Tibial artery (tissue), 4 donors: ENCODE measurements at regions of chr11 and their contacts with region 1.

Region 1: GRCh38 chr11:3341298-3341697 is 37.6 kb downstream of the ZNF195 start:
- DNase-seq: peak in 1 of 2 donors; percentile 38
- H3K4me3 ChIP-seq: no peak overlapping the region
- H3K27ac ChIP-seq: no peak overlapping the region
- H3K4me1 ChIP-seq: no peaks in the 10 kb centered on the region
- H3K27me3 ChIP-seq: peaks cover 0 to 11% of the 10 kb centered on the region in 2 donors
- CTCF ChIP-seq: peak; percentile 38 to 49

Region 2: DNA sequence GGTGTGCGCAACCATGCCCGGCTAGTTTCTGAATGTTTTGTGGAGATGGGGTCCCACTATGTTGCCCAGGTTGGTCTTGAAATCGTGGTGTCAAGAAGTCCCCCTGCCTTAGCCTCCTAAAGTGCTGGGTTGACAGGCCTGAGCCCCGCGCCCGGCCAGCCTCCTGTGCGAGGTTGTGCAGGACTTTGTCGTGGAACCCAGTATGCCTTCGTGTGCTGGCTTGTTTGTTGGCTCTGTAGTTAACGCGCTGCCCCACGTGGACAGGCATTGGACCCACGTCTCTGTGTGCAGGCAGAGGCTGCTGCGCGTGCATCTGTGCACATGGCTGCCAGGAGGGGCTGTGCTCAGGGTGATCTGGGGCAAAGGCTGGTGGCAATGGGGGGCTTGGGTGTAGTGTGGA is 71.5 kb after region 1 on chr11:
- intact Hi-C with region 1: loop called (anchors 10 kb)
- DNase-seq: no peak
- H3K4me3 ChIP-seq: no peak overlapping the region
- H3K27ac ChIP-seq: no peak overlapping the region
- H3K4me1 ChIP-seq: peaks cover 0 to 3% (median 0%) of the 10 kb centered on the region in 4 donors
- H3K27me3 ChIP-seq: no peaks in the 10 kb centered on the region
- CTCF ChIP-seq: no peak